HepG2 (cell line): ENCODE measurements at regions of chr12 and their contacts with region 1.

Region 1: GRCh38 chr12:71746983-71747611 is 7.6 kb upstream of the RAB21 start:
- DNase-seq: peak; percentile 66
- ATAC-seq: peak; percentile 96
- H3K4me3 ChIP-seq: no peak overlapping the region; a peak in 1 of 6 replicates
- H3K27ac ChIP-seq: no peak overlapping the region
- H3K4me1 ChIP-seq: peaks cover 10% of the 10 kb centered on the region
- H3K27me3 ChIP-seq: no peaks in the 10 kb centered on the region; a peak in 1 of 5 replicates
- CTCF ChIP-seq: peak; percentile 86
- EP300 ChIP-seq: no peak
- POLR2A ChIP-seq: no peak
- RAD21 ChIP-seq: peak; percentile 69

Region 2: DNA sequence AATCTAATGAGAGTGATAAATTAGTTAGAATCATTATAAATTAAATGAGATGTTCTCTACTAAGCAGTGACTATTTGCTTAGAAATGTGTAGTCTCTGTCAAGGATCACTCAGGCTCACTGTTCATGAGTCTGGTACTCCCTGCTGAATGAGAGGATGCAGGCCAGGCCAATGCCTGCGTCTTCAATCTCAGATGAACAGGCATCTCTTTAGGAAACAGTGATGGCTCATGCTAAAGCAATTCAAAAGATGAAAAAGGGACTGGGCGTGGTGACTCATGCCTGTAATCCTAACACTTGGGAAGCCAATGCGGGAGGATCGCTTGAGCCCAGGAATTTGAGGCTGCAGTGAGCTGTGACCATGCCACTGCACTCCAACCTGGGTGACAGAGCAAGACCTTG is 190.2 kb before region 1 on chr12:
- CTCF ChIA-PET with region 1: no interaction called
- POLR2A ChIA-PET with region 1: no interaction called
- in situ Hi-C with region 1: no loop called
- intact Hi-C with region 1: loop called (anchors 5 kb)
- DNase-seq: peak; percentile 18
- ATAC-seq: no peak
- H3K4me3 ChIP-seq: no peak overlapping the region
- H3K27ac ChIP-seq: no peak overlapping the region
- H3K4me1 ChIP-seq: peaks cover 42% of the 10 kb centered on the region
- H3K27me3 ChIP-seq: no peaks in the 10 kb centered on the region
- CTCF ChIP-seq: no peak
- EP300 ChIP-seq: no peak
- POLR2A ChIP-seq: no peak
- RAD21 ChIP-seq: no peak

Region 3: GRCh38 chr12:71636704-71637115 is 110.4 kb before region 1 on chr12:
- CTCF ChIA-PET with region 1: interaction called, 17 read pairs
- POLR2A ChIA-PET with region 1: interaction called, 3 read pairs
- in situ Hi-C with region 1: no loop called
- intact Hi-C with region 1: loop called (anchors 1 kb)
- DNase-seq: peak; percentile 70
- ATAC-seq: peak; percentile 51
- H3K4me3 ChIP-seq: no peak overlapping the region
- H3K27ac ChIP-seq: no peak overlapping the region
- H3K4me1 ChIP-seq: no peaks in the 10 kb centered on the region
- H3K27me3 ChIP-seq: no peaks in the 10 kb centered on the region
- CTCF ChIP-seq: peak; percentile 70
- EP300 ChIP-seq: no peak
- POLR2A ChIP-seq: no peak
- RAD21 ChIP-seq: peak; percentile 29; the same call in 1 of the 2 replicates